Dendritic cell treated with granulocyte-macrophage colony-stimulating factor and Interleukin-4, amounts not matched to agents 40 ng/mL and 50 ng/mL, for 4 days (primary cell): ENCODE measurements at regions of chr16 and their contacts with region 1.

Region 1: GRCh38 chr16:57648590-57649442 is 19.3 kb upstream of the ADGRG3 start:
- H3K4me3 Mint-ChIP-seq: no peak overlapping the region
- H3K27ac Mint-ChIP-seq: no peak overlapping the region
- H3K4me1 Mint-ChIP-seq: peaks cover 23% of the 10 kb centered on the region
- H3K27me3 Mint-ChIP-seq: peaks cover 58% of the 10 kb centered on the region

Region 2: GRCh38 chr16:57576429-57576870 is 72.4 kb before region 1 on chr16:
- intact Hi-C with region 1: loop called (anchors 5 kb)
- H3K4me3 Mint-ChIP-seq: no peak overlapping the region
- H3K27ac Mint-ChIP-seq: no peak overlapping the region
- H3K4me1 Mint-ChIP-seq: peaks cover 16% of the 10 kb centered on the region
- H3K27me3 Mint-ChIP-seq: peaks cover 89% of the 10 kb centered on the region

Region 3: GRCh38 chr16:57591086-57591869 is 57.5 kb before region 1 on chr16:
- intact Hi-C with region 1: loop called (anchors 5 kb)
- H3K4me3 Mint-ChIP-seq: no peak overlapping the region
- H3K27ac Mint-ChIP-seq: no peak overlapping the region
- H3K4me1 Mint-ChIP-seq: peaks cover 30% of the 10 kb centered on the region
- H3K27me3 Mint-ChIP-seq: peaks cover 39% of the 10 kb centered on the region

Region 4: DNA sequence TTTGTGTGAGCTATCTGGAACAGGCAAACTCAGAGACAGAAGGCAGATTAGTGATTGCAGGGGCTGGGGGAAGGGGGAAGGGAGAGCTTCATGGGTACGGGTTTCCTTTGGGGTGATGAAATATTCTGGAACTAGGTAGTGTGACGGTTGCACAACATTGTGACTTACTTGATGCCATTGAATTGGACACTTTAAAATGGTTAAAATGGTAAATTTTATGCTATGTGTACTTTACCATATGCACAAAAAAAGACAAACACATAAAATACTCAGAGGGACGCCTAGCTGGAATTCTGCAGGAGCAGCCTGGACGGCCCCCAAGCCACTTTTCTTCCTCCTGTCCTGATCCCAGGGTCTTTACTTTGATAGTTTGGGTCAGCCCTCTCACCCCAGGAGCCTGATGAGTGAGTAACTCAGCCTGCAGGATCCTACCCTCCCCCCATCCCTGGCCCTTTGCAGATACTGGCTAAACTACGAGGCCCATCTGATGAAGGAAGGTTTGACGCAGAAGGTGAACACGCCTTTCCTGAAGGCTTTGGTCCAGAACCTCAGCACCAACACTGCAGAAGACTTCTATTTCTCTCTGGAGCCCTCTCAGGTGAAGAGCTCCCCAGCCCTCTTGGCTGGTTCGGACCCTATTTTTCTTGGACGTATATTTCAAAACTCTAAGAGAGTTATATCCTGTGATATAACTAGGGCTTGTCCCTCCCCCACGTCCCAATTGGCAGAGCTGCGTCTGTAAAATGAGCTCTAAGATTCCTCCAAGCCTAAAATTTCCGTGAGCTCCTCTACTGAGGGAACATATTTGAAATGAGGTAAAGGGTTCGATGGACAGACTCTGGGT is 27.1 kb after region 1 on chr16:
- intact Hi-C with region 1: no loop called
- H3K4me3 Mint-ChIP-seq: no peak overlapping the region
- H3K27ac Mint-ChIP-seq: no peak overlapping the region
- H3K4me1 Mint-ChIP-seq: peaks cover 32% of the 10 kb centered on the region
- H3K27me3 Mint-ChIP-seq: peaks cover 5% of the 10 kb centered on the region

Region 5: DNA sequence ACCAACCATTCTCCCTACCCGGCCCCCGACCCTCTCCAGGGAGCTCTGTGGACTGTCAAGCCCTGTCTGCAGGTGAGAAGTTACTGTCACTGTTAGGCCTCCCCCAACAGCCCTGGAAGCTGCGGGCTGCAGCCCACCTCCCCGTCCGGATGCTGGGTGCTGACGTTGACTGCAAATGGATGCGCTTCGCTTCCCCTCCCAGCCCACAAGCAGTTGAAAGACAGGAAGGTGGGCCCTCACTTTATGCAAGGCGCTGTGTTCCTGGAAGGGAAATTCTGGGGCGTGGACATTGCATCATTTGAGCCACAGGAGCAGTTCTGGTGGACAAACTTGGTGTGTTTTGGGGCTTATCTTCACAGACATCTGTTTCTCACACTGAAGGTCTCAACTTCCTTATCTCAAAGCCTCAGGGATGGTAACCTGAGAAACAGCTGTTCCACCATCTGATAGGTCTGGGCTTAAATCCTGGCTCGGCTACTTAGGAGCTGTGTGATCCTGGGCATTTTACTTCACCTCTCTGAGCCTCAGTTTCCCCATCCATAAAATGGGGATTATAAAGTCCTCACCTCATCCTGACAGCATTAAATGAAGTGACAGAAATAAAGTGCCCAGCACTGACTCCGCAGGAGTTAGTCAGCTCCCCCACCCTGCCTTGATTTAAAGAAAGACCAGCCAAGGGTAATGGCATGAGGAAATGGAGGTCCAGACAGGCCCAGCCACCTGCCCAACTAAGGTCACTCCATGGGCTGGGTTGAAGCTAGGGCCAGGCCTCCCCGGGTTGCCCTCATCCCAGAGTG is 41.1 kb after region 1 on chr16:
- intact Hi-C with region 1: no loop called
- H3K4me3 Mint-ChIP-seq: no peak overlapping the region
- H3K27ac Mint-ChIP-seq: no peak overlapping the region
- H3K4me1 Mint-ChIP-seq: peaks cover 46% of the 10 kb centered on the region
- H3K27me3 Mint-ChIP-seq: peaks cover 14% of the 10 kb centered on the region

Region 6: DNA sequence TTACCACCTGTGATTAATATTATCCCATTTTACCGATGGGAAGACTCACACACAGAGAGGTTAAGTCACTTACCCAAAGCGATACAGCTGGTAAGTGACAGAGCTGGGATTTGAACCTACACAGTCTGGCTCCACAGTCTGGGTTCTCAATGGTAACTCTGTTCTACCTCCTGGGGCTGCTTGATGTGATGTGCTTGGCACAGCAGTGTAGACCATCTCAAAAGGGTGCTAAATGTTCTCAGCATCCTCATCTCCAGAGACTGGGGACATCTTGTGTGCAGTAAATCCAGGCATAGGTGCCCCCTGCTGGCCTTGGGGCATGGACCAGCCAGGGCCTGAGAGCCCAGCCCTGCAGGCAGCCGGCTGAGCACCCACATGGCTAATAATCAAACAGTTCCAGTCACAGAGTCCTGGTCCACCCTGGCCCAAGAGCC is 71.3 kb after region 1 on chr16:
- intact Hi-C with region 1: loop called (anchors 1 kb)
- H3K4me3 Mint-ChIP-seq: no peak overlapping the region
- H3K27ac Mint-ChIP-seq: no peak overlapping the region
- H3K4me1 Mint-ChIP-seq: no peaks in the 10 kb centered on the region
- H3K27me3 Mint-ChIP-seq: no peaks in the 10 kb centered on the region